ENCODE measurements at regions of chr2 and their contacts with region 1.

Region 1: DNA sequence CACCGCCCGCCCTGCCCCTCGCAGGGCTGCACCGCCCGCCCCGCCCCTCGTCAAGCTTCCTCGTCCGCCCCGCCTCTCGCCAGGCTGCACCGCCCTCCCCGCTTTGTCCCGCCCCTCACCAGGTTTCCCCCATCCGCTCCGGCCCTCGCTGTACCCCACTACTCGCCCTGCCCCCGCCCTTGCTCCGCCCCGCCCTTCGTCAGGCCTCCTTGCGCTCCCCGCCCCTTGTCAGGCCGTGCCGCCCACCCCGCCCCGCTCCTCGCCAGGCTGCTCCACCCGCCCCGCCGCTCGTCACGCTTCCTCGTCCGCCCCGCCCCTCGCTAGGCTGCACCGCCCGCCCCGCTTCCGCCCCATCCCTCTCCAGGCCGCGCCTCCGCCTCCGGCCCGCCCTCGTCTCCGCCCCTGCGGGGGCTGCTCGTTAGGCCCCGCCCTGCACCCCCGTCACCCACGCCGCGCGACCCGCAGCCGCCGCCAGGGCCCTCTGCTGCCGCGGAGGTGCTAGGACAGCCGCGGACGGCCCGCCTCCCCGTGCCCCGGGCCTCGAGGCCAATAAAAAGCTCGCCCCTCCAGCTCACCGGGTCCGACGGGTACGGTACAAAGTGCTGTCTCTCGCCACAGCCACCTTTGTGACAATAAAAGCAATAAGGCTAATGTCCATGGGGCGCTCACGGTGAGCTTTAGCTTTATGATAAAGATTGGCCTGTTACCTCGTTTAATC is 574 bp upstream of the DNPEP start:
- DNase-seq: peak; percentile 98 to 100 (median 99)
- ATAC-seq: peak; percentile 78
- H3K4me3 ChIP-seq: peak overlapping the region; percentile 44
- H3K4me3 Mint-ChIP-seq: peak overlapping the region; percentile 83
- H3K27ac ChIP-seq: peak overlapping the region; percentile 64 to 75
- H3K27ac Mint-ChIP-seq: peak overlapping the region; percentile 95
- H3K4me1 ChIP-seq: peaks cover 26% of the 10 kb centered on the region
- H3K4me1 Mint-ChIP-seq: peaks cover 22% of the 10 kb centered on the region
- H3K27me3 ChIP-seq: no peaks in the 10 kb centered on the region
- H3K27me3 Mint-ChIP-seq: no peaks in the 10 kb centered on the region
- CTCF ChIP-seq: peak; percentile 65

Region 2: GRCh38 chr2:218659258-218659987 is 728.9 kb before region 1 on chr2 and contains the starts of genes BCS1L and ZNF142:
- CTCF ChIA-PET with region 1: interaction called, 3 read pairs
- POLR2A ChIA-PET with region 1: interaction called, 6 read pairs
- intact Hi-C with region 1: loop called in 1 of 2 experiments (anchors 5 kb)
- DNase-seq: peak; percentile 82 to 95 (median 92)
- ATAC-seq: peak; percentile 98
- H3K4me3 ChIP-seq: peak within 1 kb of the TSS; percentile 79
- H3K4me3 Mint-ChIP-seq: peak within 1 kb of the TSS; percentile 95
- H3K27ac ChIP-seq: peak within 1 kb of the TSS; percentile 53 to 83
- H3K27ac Mint-ChIP-seq: peak within 1 kb of the TSS; percentile 89
- H3K4me1 ChIP-seq: peaks cover 19% of the 10 kb centered on the region
- H3K4me1 Mint-ChIP-seq: peaks cover 35% of the 10 kb centered on the region
- H3K27me3 ChIP-seq: no peaks in the 10 kb centered on the region
- H3K27me3 Mint-ChIP-seq: no peaks in the 10 kb centered on the region
- CTCF ChIP-seq: no peak
- total RNA-seq, gene BCS1L: 11.4 to 12.7 TPM
- total RNA-seq, gene ZNF142: 40.3 to 44.2 TPM

Region 3: GRCh38 chr2:219177552-219178376 is 210.5 kb before region 1 on chr2 and contains the start of gene RETREG2:
- CTCF ChIA-PET with region 1: no interaction called
- POLR2A ChIA-PET with region 1: interaction called, 13 read pairs
- intact Hi-C with region 1: no loop called
- DNase-seq: peak; percentile 67 to 96 (median 78)
- ATAC-seq: peak; percentile 66
- H3K4me3 ChIP-seq: peak within 1 kb of the TSS; percentile 90
- H3K4me3 Mint-ChIP-seq: peak within 1 kb of the TSS; percentile 94
- H3K27ac ChIP-seq: peak within 1 kb of the TSS; percentile 97 to 99
- H3K27ac Mint-ChIP-seq: peak within 1 kb of the TSS; percentile 99
- H3K4me1 ChIP-seq: peaks cover 89% of the 10 kb centered on the region
- H3K4me1 Mint-ChIP-seq: peaks cover 72% of the 10 kb centered on the region
- H3K27me3 ChIP-seq: no peaks in the 10 kb centered on the region
- H3K27me3 Mint-ChIP-seq: no peaks in the 10 kb centered on the region
- CTCF ChIP-seq: no peak
- total RNA-seq, gene RETREG2: 82.3 to 83.2 TPM

Region 4: DNA sequence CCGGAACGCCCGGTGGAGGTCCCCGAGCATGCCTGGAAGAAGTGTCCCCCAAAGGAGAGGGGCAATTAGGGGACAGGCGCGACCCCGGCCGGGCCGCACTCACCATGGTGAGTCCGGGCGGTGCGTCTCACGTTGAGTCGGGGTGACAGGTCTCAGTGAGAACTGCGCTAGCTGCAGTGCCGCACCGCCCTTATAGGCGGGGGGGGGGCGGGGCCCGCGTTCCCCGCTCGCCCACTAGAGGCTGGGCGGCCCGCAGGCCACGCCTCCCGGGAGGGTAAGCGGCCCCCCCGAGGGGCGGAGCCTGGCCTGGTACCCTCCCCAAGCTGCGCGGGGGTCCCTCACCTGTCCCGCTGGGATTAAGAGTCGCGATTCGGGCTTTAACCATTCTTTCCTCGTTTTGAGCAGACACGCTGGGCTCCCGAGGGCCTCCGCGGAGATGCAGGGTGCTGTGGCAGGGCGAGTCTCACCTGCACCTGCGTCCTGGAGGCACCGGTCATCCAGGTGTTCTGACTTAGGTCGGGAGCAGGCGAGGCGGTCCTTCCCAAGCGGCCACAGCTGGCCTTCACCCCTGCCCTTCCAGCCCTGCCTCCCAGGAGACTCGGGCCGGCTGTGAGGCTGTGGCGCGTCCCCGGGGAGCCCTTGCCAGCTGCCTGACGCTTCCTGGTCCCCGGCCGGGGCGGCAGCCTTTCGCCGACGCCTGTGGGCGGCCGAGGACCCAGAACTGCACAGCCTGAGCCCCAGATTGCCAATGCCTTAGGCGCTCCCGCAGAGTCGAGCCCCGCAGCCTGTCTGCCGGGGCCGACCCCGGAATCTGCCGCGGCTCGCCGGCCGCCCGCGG is 134.3 kb before region 1 on chr2 and contains the start of gene TUBA4A:
- CTCF ChIA-PET with region 1: interaction called, 5 read pairs
- POLR2A ChIA-PET with region 1: interaction called, 19 read pairs
- intact Hi-C with region 1: no loop called
- DNase-seq: peak; percentile 83 to 95 (median 90)
- ATAC-seq: peak; percentile 71
- H3K4me3 ChIP-seq: peak within 1 kb of the TSS; percentile 88
- H3K4me3 Mint-ChIP-seq: peak within 1 kb of the TSS; percentile 88
- H3K27ac ChIP-seq: peak within 1 kb of the TSS; percentile 73 to 87
- H3K27ac Mint-ChIP-seq: peak within 1 kb of the TSS; percentile 96
- H3K4me1 ChIP-seq: peaks cover 49% of the 10 kb centered on the region
- H3K4me1 Mint-ChIP-seq: peaks cover 49% of the 10 kb centered on the region
- H3K27me3 ChIP-seq: no peaks in the 10 kb centered on the region
- H3K27me3 Mint-ChIP-seq: no peaks in the 10 kb centered on the region
- CTCF ChIP-seq: no peak
- total RNA-seq, gene TUBA4A: 183 to 185 TPM

Region 5: GRCh38 chr2:219369447-219369861 is 18.8 kb before region 1 on chr2:
- CTCF ChIA-PET with region 1: no interaction called
- POLR2A ChIA-PET with region 1: no interaction called
- intact Hi-C with region 1: no loop called
- DNase-seq: no peak
- ATAC-seq: no peak
- H3K4me3 ChIP-seq: no peak overlapping the region
- H3K4me3 Mint-ChIP-seq: no peak overlapping the region
- H3K27ac ChIP-seq: no peak overlapping the region
- H3K27ac Mint-ChIP-seq: no peak overlapping the region
- H3K4me1 ChIP-seq: no peaks in the 10 kb centered on the region
- H3K4me1 Mint-ChIP-seq: no peaks in the 10 kb centered on the region
- H3K27me3 ChIP-seq: no peaks in the 10 kb centered on the region
- H3K27me3 Mint-ChIP-seq: no peaks in the 10 kb centered on the region
- CTCF ChIP-seq: no peak

Region 6: GRCh38 chr2:219402665-219403515 is 14.6 kb after region 1 on chr2:
- CTCF ChIA-PET with region 1: interaction called, 15 read pairs
- POLR2A ChIA-PET with region 1: interaction called, 9 read pairs
- intact Hi-C with region 1: no loop called
- DNase-seq: peak; percentile 35 to 81 (median 48)
- ATAC-seq: peak; percentile 99
- H3K4me3 ChIP-seq: no peak overlapping the region
- H3K4me3 Mint-ChIP-seq: no peak overlapping the region
- H3K27ac ChIP-seq: no peak overlapping the region
- H3K27ac Mint-ChIP-seq: no peak overlapping the region
- H3K4me1 ChIP-seq: peaks cover under 1% of the 10 kb centered on the region
- H3K4me1 Mint-ChIP-seq: peaks cover 5% of the 10 kb centered on the region
- H3K27me3 ChIP-seq: peaks cover 0 to 2% of the 10 kb centered on the region in 2 experiments
- H3K27me3 Mint-ChIP-seq: peaks cover 14% of the 10 kb centered on the region
- CTCF ChIP-seq: peak; percentile 92

Region 7: GRCh38 chr2:219543601-219544358 is 155.5 kb after region 1 on chr2 and contains the starts of genes CHPF and TMEM198:
- CTCF ChIA-PET with region 1: interaction called, 10 read pairs
- POLR2A ChIA-PET with region 1: interaction called, 13 read pairs
- intact Hi-C with region 1: loop called in 1 of 2 experiments (anchors 5 kb)
- DNase-seq: peak; percentile 83 to 97 (median 90)
- ATAC-seq: peak; percentile 69
- H3K4me3 ChIP-seq: peak within 1 kb of the TSS; percentile 72
- H3K4me3 Mint-ChIP-seq: peak within 1 kb of the TSS; percentile 86
- H3K27ac ChIP-seq: peak within 1 kb of the TSS; percentile 54 to 60
- H3K27ac Mint-ChIP-seq: peak within 1 kb of the TSS; percentile 75
- H3K4me1 ChIP-seq: peaks cover 32% of the 10 kb centered on the region
- H3K4me1 Mint-ChIP-seq: peaks cover 22% of the 10 kb centered on the region
- H3K27me3 ChIP-seq: no peaks in the 10 kb centered on the region
- H3K27me3 Mint-ChIP-seq: peaks cover 7% of the 10 kb centered on the region
- CTCF ChIP-seq: no peak
- total RNA-seq, gene CHPF: 6.5 to 7.1 TPM
- total RNA-seq, gene TMEM198: 0.47 to 0.91 TPM